K562 (cell line): ENCODE measurements at regions of chr18 and their contacts with region 1.

Region 1: GRCh38 chr18:59837586-59837985 is 62.2 kb upstream of the PMAIP1 start:
- DNase-seq: peak; percentile 47 to 68 (median 48)
- ATAC-seq: peak; percentile 89
- H3K4me3 ChIP-seq: no peak overlapping the region
- H3K27ac ChIP-seq: no peak overlapping the region
- H3K4me1 ChIP-seq: no peaks in the 10 kb centered on the region; a peak in 1 of 5 replicates
- H3K27me3 ChIP-seq: no peaks in the 10 kb centered on the region
- CTCF ChIP-seq: peak; percentile 75 to 79 (median 78)
- EP300 ChIP-seq: no peak
- POLR2A ChIP-seq: no peak
- RAD21 ChIP-seq: peak; percentile 72 to 83

Region 2: DNA sequence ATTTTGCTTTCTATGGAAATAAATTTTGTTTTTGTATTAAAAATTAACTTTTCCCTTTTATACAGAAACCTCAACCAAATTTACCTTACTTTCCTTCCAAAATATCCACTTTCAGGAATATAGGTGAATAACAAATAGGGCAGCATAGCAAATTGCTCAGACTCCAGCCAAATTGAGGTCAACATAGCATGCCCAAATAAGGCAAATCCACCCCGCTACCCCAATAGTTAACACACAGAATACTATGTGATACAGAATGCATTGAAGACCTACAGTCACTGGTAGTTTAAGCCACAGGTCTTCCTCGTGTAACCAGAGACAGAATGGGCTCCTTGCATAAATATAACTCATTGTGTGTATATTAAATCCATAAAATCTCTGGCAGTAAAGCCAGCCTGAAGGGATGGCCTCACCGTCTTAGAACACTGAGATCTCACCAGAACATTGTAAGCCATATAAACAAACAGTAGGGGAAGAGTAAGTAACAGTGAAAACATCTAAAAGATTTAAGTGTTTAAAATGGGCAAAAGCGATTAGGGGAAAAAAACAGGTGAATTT is 134.4 kb after region 1 on chr18:
- CTCF ChIA-PET with region 1: no interaction called
- POLR2A ChIA-PET with region 1: no interaction called
- in situ Hi-C with region 1: loop called (anchors 10 kb)
- intact Hi-C with region 1: no loop called
- DNase-seq: no peak
- ATAC-seq: no peak
- H3K4me3 ChIP-seq: no peak overlapping the region
- H3K27ac ChIP-seq: no peak overlapping the region
- H3K4me1 ChIP-seq: no peaks in the 10 kb centered on the region; a peak in 1 of 5 replicates
- H3K27me3 ChIP-seq: peaks cover 0 to 11% of the 10 kb centered on the region in 2 experiments; a peak in 2 of 5 replicates
- CTCF ChIP-seq: no peak
- EP300 ChIP-seq: no peak
- POLR2A ChIP-seq: no peak
- RAD21 ChIP-seq: no peak

Region 3: DNA sequence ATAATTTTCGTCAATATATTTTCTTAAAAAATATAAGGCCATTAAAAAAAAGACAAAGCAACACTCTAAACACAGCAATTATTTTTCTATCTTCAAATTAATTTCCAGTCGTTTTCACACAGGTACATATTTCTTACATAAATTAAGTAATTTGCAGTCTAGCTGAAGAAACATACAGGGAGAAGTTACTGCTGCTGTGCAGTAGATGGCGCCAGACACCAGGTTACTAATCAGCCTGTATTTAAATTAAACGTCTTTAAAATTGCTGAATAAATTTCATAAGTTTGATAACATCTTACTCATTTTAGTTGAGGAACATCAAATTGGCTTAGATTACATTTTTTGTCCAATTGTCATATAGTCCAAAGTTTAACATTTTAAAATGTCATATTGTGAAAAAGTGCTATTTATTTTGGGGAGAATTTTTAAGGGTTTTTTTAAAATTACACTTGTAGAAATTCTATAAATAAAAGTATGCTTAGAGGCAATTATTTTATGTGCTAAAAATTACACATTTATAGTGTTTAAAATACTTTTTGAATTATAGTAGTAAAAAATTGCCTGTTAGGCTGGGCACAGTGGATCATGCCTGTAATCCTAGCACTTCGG is 150.6 kb after region 1 on chr18:
- CTCF ChIA-PET with region 1: no interaction called
- POLR2A ChIA-PET with region 1: no interaction called
- in situ Hi-C with region 1: no loop called
- intact Hi-C with region 1: loop called (anchors 5 kb)
- DNase-seq: peak; percentile 21 to 52 (median 22)
- ATAC-seq: 0 out of 3 replicates have a peak, but pooled peaks have one; percentile 52
- H3K4me3 ChIP-seq: no peak overlapping the region
- H3K27ac ChIP-seq: no peak overlapping the region
- H3K4me1 ChIP-seq: no peaks in the 10 kb centered on the region
- H3K27me3 ChIP-seq: no peaks in the 10 kb centered on the region
- CTCF ChIP-seq: peak; percentile 55 to 84 (median 64); a peak in 5 of 6 replicates
- EP300 ChIP-seq: no peak
- POLR2A ChIP-seq: no peak
- RAD21 ChIP-seq: peak; percentile 85 to 90

Region 4: GRCh38 chr18:60549338-60549960 is 711.9 kb after region 1 on chr18:
- CTCF ChIA-PET with region 1: no interaction called
- POLR2A ChIA-PET with region 1: no interaction called
- in situ Hi-C with region 1: loop called (anchors 25 kb)
- intact Hi-C with region 1: loop called (anchors 10 kb)
- DNase-seq: peak; percentile 6 to 42 (median 10)
- ATAC-seq: 0 out of 3 replicates have a peak, but pooled peaks have one; percentile 38
- H3K4me3 ChIP-seq: no peak overlapping the region
- H3K27ac ChIP-seq: no peak overlapping the region
- H3K4me1 ChIP-seq: no peaks in the 10 kb centered on the region; a peak in 1 of 5 replicates
- H3K27me3 ChIP-seq: no peaks in the 10 kb centered on the region
- CTCF ChIP-seq: peak in 2 of 3 experiments; percentile 27 to 61; a peak in 3 of 6 replicates
- EP300 ChIP-seq: no peak
- POLR2A ChIP-seq: no peak
- RAD21 ChIP-seq: peak; percentile 81 to 82